Mucosa of descending colon (tissue), 3 donors: ENCODE measurements at regions of chr18 and their contacts with region 1.

Region 1: DNA sequence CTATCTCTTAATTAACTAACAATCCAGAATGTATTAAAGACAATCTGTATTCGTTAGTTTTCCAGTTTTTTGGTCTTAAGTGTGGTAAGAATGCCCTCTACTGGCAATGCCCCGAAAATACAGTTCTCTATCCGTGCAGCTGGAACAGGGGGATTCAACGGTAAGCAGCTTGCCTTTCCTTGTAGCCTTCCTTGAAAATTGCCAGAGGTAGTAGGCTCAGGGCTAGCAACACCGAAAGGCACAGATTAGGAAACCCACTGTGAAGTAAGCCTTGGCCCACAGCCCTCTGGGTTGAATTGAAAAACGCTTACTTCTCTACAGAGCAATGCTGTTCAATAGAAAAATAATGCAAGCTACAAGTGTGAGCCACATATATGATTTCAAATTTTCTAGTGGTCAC is 17.1 kb upstream of the VPS4B start:
- DNase-seq: peak in 1 of 3 donors; percentile 65
- ATAC-seq: peak; percentile 81
- H3K4me3 ChIP-seq: no peak overlapping the region
- H3K4me1 ChIP-seq: no peaks in the 10 kb centered on the region
- CTCF ChIP-seq: peak; percentile 69

Region 2: DNA sequence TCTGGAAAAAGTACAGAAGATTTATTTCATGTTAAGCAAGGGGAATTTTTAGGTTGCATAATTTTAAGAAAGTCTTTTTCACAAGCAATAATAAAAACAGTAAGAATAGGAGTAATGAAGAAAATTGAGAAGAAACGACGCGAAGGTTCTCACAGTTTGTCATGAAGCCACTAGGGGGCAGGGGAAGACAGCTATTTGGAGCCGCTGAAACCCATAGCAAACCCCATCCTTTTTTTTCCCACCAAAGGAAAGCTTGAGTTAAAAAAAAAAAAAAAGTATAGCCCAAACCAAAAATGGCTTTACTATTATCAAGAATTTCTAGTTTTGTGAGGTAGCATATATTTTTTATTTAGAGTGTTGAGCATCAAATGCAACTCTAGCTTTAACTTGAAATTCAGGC is 423.1 kb before region 1 on chr18:
- intact Hi-C with region 1: loop called in 1 of 2 experiments (anchors 5 kb)
- DNase-seq: peak in 1 of 3 donors; percentile 71
- ATAC-seq: peak; percentile 70
- H3K4me3 ChIP-seq: no peak overlapping the region
- H3K4me1 ChIP-seq: no peaks in the 10 kb centered on the region
- CTCF ChIP-seq: peak; percentile 48

Region 3: GRCh38 chr18:63138436-63139340 is 300.6 kb before region 1 on chr18:
- intact Hi-C with region 1: loop called in 1 of 2 experiments (anchors 10 kb)
- DNase-seq: peak in 1 of 3 donors; percentile 25
- ATAC-seq: peak; percentile 38
- H3K4me3 ChIP-seq: no peak overlapping the region
- H3K4me1 ChIP-seq: peaks cover 10% of the 10 kb centered on the region
- CTCF ChIP-seq: no peak